Activated CD4-positive, alpha-beta T cell treated with anti-CD3 and anti-CD28 coated beads for 36 hours (primary cell): ENCODE measurements at regions of chr1 and their contacts with region 1.

Region 1: DNA sequence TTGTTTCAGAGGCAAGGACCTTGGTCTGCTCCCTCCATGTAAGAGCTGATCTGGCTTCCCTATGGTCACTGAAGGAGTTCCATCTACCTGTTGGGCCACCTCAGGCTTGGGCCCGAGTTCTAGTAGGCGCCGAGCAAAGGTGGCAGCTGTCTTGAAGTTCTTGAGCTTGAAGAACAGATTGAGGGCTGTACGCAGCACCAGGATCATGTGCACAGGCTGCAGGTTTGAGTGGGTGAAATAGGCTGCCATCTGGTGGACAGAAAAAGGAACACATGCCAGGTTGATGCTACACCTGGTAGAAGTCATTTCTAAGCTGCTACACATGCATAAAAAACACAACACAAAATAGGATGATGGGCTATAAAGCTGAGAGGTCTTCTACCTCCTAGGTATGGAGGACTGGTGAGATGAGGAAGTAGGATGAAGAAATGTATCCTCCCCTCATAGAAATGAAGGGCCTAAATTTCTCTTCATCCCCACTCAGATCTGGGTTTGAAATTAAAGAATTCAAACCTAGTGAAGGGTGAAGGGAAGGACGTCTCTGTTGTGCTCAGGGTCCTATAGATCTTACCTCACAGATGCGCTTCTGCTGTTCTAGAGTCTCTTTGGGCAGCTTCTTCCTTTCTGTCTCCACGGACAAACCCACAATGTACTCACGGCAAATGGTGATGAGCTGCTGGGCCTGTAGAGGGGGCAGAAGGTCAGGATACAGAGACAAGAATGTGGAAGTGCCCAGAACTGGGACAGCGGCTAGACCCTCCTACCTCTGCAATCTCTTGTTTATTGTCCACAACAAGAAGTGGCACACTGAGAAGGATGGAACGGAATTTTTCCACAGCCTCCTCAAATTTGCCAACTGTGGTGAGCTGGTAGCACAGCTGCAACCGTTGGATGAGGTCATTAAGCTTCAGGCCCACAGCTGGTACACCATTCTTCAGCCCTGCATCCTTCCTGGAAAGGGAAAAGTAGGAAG is 6.6 kb upstream of the PEX19 start:
- DNase-seq: peak; percentile 76
- ATAC-seq: peak; percentile 98
- H3K4me3 Mint-ChIP-seq: no peak overlapping the region
- H3K27ac Mint-ChIP-seq: no peak overlapping the region
- H3K4me1 Mint-ChIP-seq: peaks cover 2% of the 10 kb centered on the region
- H3K27me3 Mint-ChIP-seq: no peaks in the 10 kb centered on the region

Region 2: GRCh38 chr1:160193091-160193819 is 98.3 kb before region 1 on chr1:
- CTCF ChIA-PET with region 1: interaction called, 44 read pairs
- POLR2A ChIA-PET with region 1: no interaction called
- intact Hi-C with region 1: loop called (anchors 1 kb)
- DNase-seq: peak; percentile 90
- ATAC-seq: peak; percentile 89
- H3K4me3 Mint-ChIP-seq: no peak overlapping the region
- H3K27ac Mint-ChIP-seq: no peak overlapping the region
- H3K4me1 Mint-ChIP-seq: no peaks in the 10 kb centered on the region
- H3K27me3 Mint-ChIP-seq: no peaks in the 10 kb centered on the region

Region 3: DNA sequence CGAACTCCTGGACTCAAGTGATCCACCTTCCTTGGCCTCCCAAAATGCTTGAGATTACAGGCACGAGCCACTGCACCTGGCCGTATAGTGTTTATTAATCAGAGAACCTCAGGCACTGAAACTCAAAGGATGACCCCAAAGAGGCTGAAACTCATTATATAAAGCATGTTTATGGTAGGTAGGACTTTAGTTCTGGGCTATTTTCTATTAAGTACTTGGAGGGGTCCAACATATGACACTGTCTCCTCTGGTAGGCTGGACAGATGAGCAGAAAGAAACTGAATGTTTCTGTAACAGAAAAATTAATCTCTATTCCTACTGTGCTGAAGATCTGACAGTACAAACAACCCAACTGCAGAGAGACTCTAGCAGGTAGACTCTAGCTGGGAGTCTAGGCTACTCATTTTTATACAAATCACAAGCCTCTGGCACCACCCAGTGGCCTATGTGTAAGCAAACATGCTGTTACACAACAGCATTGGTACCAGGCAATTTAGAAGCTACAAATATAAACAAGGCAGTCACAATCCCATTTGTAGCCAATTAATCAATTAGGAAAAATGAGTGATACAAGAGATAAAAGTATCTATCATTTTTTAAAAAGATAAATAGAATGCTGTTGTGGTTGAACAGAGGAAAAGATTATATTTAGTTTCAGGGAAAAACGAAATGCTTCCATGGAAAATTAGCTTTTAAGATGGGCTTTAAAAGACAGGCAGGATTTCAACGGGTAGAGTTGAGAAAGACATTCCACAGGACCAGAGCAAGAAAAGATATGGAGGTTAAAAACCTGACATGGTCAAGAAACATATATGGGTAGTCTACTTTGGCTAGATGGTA is 39.6 kb before region 1 on chr1:
- CTCF ChIA-PET with region 1: interaction called, 17 read pairs
- POLR2A ChIA-PET with region 1: interaction called, 4 read pairs
- intact Hi-C with region 1: no loop called
- DNase-seq: peak; percentile 74
- ATAC-seq: peak; percentile 93
- H3K4me3 Mint-ChIP-seq: no peak overlapping the region
- H3K27ac Mint-ChIP-seq: no peak overlapping the region
- H3K4me1 Mint-ChIP-seq: peaks cover 14% of the 10 kb centered on the region
- H3K27me3 Mint-ChIP-seq: no peaks in the 10 kb centered on the region

Region 4: DNA sequence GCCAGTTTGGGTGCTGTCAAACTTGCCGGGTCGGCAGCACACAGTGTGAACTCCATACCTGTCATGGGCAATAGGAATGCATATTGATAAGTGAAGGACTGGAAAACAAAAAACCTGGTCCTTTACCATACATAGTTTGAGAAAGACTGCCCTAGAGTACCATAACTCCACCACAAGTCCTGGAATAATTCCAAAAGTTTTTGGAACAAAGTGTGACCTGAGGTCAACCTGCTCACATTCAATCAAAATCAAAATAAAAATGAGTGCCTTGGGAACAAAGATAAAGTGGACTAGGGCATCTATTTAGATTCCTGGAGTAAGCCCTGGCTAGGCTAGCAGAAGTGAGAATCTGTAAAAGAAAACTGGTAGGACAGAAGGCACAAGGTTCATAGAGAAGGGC is 14.2 kb before region 1 on chr1:
- CTCF ChIA-PET with region 1: interaction called, 15 read pairs
- POLR2A ChIA-PET with region 1: no interaction called
- intact Hi-C with region 1: no loop called
- DNase-seq: no peak
- ATAC-seq: no peak
- H3K4me3 Mint-ChIP-seq: no peak overlapping the region
- H3K27ac Mint-ChIP-seq: no peak overlapping the region
- H3K4me1 Mint-ChIP-seq: no peaks in the 10 kb centered on the region
- H3K27me3 Mint-ChIP-seq: no peaks in the 10 kb centered on the region

Region 5: GRCh38 chr1:160328184-160328583 is 36.6 kb after region 1 on chr1:
- CTCF ChIA-PET with region 1: interaction called, 11 read pairs
- POLR2A ChIA-PET with region 1: no interaction called
- intact Hi-C with region 1: no loop called
- DNase-seq: no peak
- ATAC-seq: no peak
- H3K4me3 Mint-ChIP-seq: no peak overlapping the region
- H3K27ac Mint-ChIP-seq: no peak overlapping the region
- H3K4me1 Mint-ChIP-seq: no peaks in the 10 kb centered on the region
- H3K27me3 Mint-ChIP-seq: no peaks in the 10 kb centered on the region

Region 6: GRCh38 chr1:160474392-160475242 is 183.1 kb after region 1 on chr1:
- CTCF ChIA-PET with region 1: no interaction called
- POLR2A ChIA-PET with region 1: no interaction called
- intact Hi-C with region 1: no loop called
- DNase-seq: no peak
- ATAC-seq: peak; percentile 93
- H3K4me3 Mint-ChIP-seq: no peak overlapping the region
- H3K27ac Mint-ChIP-seq: no peak overlapping the region
- H3K4me1 Mint-ChIP-seq: peaks cover 6% of the 10 kb centered on the region
- H3K27me3 Mint-ChIP-seq: no peaks in the 10 kb centered on the region